A549 (cell line): ENCODE measurements at regions of chr16 and their contacts with region 1.

Region 1: DNA sequence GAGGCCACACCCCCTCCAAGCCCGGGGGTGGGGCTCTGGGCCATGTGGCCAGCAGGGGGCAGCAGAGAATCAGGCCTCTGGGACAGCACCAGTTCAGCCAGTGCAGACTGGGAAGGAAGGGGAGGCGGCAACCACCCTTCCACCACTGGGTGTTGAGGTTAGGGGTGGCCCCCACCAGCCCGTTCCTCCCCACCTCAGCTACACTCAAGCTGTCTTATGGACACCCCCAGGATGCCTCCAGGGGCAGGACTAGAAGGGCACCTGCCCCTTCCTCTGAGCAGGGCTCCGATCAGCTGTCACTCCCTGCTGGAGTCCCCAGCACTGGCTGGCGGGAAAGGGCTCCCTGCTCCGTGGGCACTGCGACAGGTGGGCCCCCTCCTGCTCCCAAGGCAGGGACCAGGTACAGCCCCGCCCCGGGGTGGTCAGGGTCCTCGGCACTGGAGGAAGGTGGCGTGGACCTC is 21.8 kb downstream of the KATNB1 start:
- DNase-seq: peak; percentile 83 to 89
- ATAC-seq: peak; percentile 36 to 83
- H3K4me3 ChIP-seq: no peak overlapping the region
- H3K27ac ChIP-seq: peak overlapping the region; percentile 69 to 92
- H3K4me1 ChIP-seq: peaks cover 76% of the 10 kb centered on the region
- CTCF ChIP-seq: peak; percentile 88
- EP300 ChIP-seq: no peak
- POLR2A ChIP-seq: no peak
- RAD21 ChIP-seq: peak; percentile 83 to 90

Region 2: GRCh38 chr16:57689762-57690558 is 67.4 kb before region 1 on chr16:
- CTCF ChIA-PET with region 1: no interaction called
- POLR2A ChIA-PET with region 1: no interaction called
- DNase-seq: no peak
- ATAC-seq: no peak; a peak in 2 of 6 replicates
- H3K4me3 ChIP-seq: no peak overlapping the region
- H3K27ac ChIP-seq: peak overlapping the region in 1 of 2 experiments; percentile 54; a peak in 1 of 6 replicates
- H3K4me1 ChIP-seq: peaks cover 17% of the 10 kb centered on the region
- CTCF ChIP-seq: no peak
- EP300 ChIP-seq: no peak
- POLR2A ChIP-seq: no peak
- RAD21 ChIP-seq: no peak

Region 3: GRCh38 chr16:57734925-57735754 is 22.2 kb before region 1 on chr16:
- CTCF ChIA-PET with region 1: interaction called, 46 read pairs
- POLR2A ChIA-PET with region 1: interaction called, 3 read pairs
- DNase-seq: peak; percentile 99 to 100
- ATAC-seq: peak; percentile 88 to 95
- H3K4me3 ChIP-seq: peak overlapping the region; percentile 72
- H3K27ac ChIP-seq: peak overlapping the region; percentile 92 to 93
- H3K4me1 ChIP-seq: peaks cover 12% of the 10 kb centered on the region
- CTCF ChIP-seq: no peak
- EP300 ChIP-seq: no peak
- POLR2A ChIP-seq: 0 out of 2 replicates have a peak, but pooled peaks have one; percentile 8
- RAD21 ChIP-seq: no peak

Region 4: GRCh38 chr16:57781741-57782606 is 24.6 kb after region 1 on chr16:
- CTCF ChIA-PET with region 1: interaction called, 20 read pairs
- POLR2A ChIA-PET with region 1: interaction called, 3 read pairs
- DNase-seq: no peak
- ATAC-seq: 0 out of 6 replicates have a peak, but pooled peaks have one; percentile 4 to 17
- H3K4me3 ChIP-seq: no peak overlapping the region
- H3K27ac ChIP-seq: peak overlapping the region; percentile 40 to 76; a peak in 4 of 6 replicates
- H3K4me1 ChIP-seq: peaks cover 76% of the 10 kb centered on the region
- CTCF ChIP-seq: no peak
- EP300 ChIP-seq: no peak
- POLR2A ChIP-seq: no peak
- RAD21 ChIP-seq: no peak

Region 5: GRCh38 chr16:57802341-57803133 is 45.2 kb after region 1 on chr16 and contains the start of gene KIFC3:
- CTCF ChIA-PET with region 1: interaction called, 44 read pairs
- POLR2A ChIA-PET with region 1: no interaction called
- DNase-seq: peak in 1 of 2 experiments; percentile 86
- ATAC-seq: peak; percentile 2 to 49
- H3K4me3 ChIP-seq: peak within 1 kb of the TSS; percentile 53
- H3K27ac ChIP-seq: peak within 1 kb of the TSS; percentile 91 to 100
- H3K4me1 ChIP-seq: peaks cover 57% of the 10 kb centered on the region
- CTCF ChIP-seq: peak; percentile 39
- EP300 ChIP-seq: peak in 1 of 2 experiments; percentile 7; a peak in 1 of 5 replicates
- POLR2A ChIP-seq: no peak; the same call in 1 of the 2 replicates
- RAD21 ChIP-seq: no peak; a peak in 2 of 5 replicates
- polyA plus RNA-seq, gene KIFC3: 127 and 128 TPM in 2 replicates

Region 6: DNA sequence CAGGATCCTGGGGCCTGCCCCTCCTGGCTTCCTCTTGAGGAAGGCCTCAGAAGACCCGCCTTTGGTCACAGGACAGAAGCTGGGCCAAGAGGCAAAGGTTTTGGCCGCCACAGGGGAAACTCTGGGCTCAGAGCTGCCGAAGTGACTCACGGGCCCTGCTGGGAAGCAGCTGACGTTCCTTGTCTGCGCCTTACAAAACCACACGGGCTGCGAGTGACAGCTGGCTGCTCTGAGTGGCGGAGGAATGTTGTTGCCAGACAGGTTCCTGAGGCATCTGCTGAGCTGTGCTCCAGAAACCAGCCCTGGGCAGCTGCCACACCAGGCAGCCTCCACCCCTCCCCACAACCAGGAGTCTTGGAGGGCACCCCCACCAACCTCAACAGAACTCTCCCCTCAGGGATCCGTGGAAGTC is 59.0 kb after region 1 on chr16:
- CTCF ChIA-PET with region 1: interaction called, 13 read pairs
- POLR2A ChIA-PET with region 1: no interaction called
- DNase-seq: peak; percentile 62 to 81
- ATAC-seq: peak; percentile 72 to 79
- H3K4me3 ChIP-seq: no peak overlapping the region
- H3K27ac ChIP-seq: peak overlapping the region; percentile 77 to 97
- H3K4me1 ChIP-seq: peaks cover 76% of the 10 kb centered on the region
- CTCF ChIP-seq: no peak
- EP300 ChIP-seq: peak in 1 of 2 experiments; percentile 57; a peak in 1 of 5 replicates
- POLR2A ChIP-seq: no peak
- RAD21 ChIP-seq: 0 out of 5 replicates have a peak, but pooled peaks of 1 of the 2 experiments have one; percentile 15

Region 7: DNA sequence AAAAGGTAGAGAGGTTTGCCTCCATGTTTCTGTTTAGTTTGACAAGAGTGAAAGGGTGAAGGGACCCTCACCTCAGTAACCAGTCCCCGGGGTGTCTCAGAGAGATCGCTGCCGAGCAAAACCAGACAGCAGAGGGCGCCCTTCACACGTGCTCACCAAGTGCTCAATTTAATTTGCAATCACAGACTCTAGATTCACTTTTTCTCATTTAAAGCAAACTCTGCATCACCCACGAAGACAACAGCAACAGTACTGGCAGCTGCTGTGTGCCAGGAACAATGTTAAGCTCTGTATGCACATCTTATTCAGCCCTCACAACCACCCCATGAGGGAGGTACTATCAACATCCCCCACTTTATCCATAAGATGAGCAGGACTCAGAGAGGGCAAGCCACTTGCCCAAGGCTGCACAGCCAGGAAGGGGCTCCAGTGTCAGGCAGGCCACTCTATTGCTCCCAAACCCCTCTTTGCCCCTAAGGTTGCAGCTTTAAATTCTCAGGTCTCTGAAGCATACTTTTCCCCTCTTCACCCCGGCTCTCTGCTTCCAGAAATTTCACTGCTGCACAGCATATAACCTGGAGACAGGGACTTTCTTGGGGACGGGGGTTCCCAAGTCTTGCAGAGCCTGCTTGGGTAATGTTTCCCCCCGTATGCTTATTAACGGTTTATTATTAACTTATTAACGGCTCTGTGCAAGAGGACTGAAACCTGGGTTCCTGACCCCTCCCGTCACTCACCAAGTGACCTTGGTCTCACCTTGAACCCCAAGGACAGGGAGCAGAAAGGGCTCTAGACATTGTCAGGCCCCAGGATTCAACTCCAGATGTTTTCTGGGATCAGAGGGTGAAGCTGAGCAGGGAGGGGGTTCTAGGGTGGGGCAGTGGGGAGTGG is 142.7 kb after region 1 on chr16:
- CTCF ChIA-PET with region 1: interaction called, 10 read pairs
- POLR2A ChIA-PET with region 1: no interaction called
- DNase-seq: peak; percentile 66 to 74
- ATAC-seq: peak; percentile 81 to 82
- H3K4me3 ChIP-seq: no peak overlapping the region
- H3K27ac ChIP-seq: peak overlapping the region; percentile 53 to 94
- H3K4me1 ChIP-seq: peaks cover 39% of the 10 kb centered on the region
- CTCF ChIP-seq: peak; percentile 97
- EP300 ChIP-seq: no peak
- POLR2A ChIP-seq: no peak
- RAD21 ChIP-seq: peak; percentile 93